ENCODE measurements at regions of chr9 and their contacts with region 1.

Region 1: GRCh38 chr9:91193658-91194391 is 167.9 kb downstream of the AUH start:
- DNase-seq: peak in 1 of 2 donors; percentile 95
- H3K4me3 ChIP-seq: peak overlapping the region; percentile 44 to 66
- H3K27ac ChIP-seq: peak overlapping the region; percentile 98 to 99
- H3K4me1 ChIP-seq: peaks cover 6 to 29% of the 10 kb centered on the region in 2 donors
- H3K27me3 ChIP-seq: no peaks in the 10 kb centered on the region
- CTCF ChIP-seq: no peak

Region 2: GRCh38 chr9:90964101-90965020 is 229.5 kb before region 1 on chr9:
- intact Hi-C with region 1: loop called (anchors 5 kb)
- DNase-seq: peak in 1 of 2 donors; percentile 83
- H3K4me3 ChIP-seq: peak overlapping the region; percentile 20 to 58
- H3K27ac ChIP-seq: peak overlapping the region; percentile 82 to 93
- H3K4me1 ChIP-seq: peaks cover 6 to 17% of the 10 kb centered on the region in 2 donors
- H3K27me3 ChIP-seq: no peaks in the 10 kb centered on the region
- CTCF ChIP-seq: peak; percentile 32 to 42 (median 33)

Region 3: DNA sequence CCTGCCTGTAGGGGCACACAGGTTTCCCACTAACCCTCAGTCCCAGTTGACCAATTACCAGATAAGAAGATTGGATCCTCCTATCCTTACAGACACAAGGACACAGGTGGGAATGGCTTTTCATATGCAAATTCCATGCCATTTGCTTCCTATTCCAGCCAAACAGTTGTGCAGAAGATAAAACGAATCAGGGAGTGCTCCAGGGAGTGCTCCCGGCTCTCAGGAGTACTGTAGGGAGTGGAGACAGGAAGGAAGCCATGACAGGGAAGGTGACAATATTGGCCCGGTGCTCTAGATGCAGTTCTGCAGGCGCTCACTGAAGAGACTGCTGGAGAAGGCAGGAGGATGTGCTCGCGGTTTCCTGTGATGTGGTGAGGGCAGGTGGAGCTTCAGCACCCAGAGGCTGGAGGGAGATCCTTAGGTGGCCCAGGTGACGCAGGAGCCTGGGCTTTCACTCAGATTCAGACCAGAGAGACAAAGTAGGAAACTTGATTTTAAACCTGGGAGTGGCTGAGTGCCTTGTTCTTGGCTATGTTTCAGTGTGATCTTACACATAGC is 92.1 kb before region 1 on chr9:
- intact Hi-C with region 1: loop called (anchors 1 kb)
- DNase-seq: no peak
- H3K4me3 ChIP-seq: no peak overlapping the region
- H3K27ac ChIP-seq: peak overlapping the region; percentile 82 to 85
- H3K4me1 ChIP-seq: peaks cover 8 to 17% of the 10 kb centered on the region in 2 donors
- H3K27me3 ChIP-seq: no peaks in the 10 kb centered on the region
- CTCF ChIP-seq: no peak

Region 4: DNA sequence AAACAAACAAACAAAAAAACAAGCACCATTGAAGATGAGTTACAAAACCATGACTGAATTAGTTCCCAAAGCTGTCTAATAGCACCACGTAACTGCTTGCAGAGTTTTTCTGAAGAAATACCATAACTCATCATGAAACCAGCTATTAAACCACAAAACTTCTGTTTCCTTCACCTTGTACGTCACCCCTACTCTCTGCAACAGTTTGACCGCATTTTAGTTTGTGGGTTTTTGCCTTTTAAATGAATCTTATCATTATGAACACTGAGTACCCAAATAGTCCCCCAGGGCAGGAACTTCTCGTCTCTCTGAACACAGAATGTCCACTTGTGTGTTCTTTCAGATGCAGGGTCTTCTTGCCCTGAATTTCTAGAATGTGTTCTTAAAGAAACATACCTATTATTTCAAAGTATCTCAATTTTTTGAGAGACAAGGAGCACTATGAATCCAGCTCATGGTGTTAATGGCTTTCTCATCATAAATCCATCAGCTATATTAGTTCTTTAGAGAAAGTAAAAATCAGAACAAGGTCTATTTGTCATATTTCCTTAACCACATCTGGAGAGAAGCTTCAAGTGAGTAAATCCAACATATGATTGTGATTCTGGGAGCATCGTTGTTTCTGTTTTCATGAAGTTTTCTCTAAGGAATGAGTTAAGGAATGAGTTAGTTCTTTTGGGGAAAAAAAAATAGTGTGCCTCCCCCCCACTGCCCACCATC is 42.7 kb before region 1 on chr9:
- intact Hi-C with region 1: no loop called
- DNase-seq: no peak
- H3K4me3 ChIP-seq: no peak overlapping the region
- H3K27ac ChIP-seq: no peak overlapping the region
- H3K4me1 ChIP-seq: no peaks in the 10 kb centered on the region
- H3K27me3 ChIP-seq: no peaks in the 10 kb centered on the region
- CTCF ChIP-seq: no peak

Region 5: GRCh38 chr9:91207729-91208418 is 14.0 kb after region 1 on chr9:
- intact Hi-C with region 1: loop called (anchors 2 kb)
- DNase-seq: no peak
- H3K4me3 ChIP-seq: peak overlapping the region in 1 of 2 donors; percentile 34
- H3K27ac ChIP-seq: peak overlapping the region; percentile 73
- H3K4me1 ChIP-seq: peaks cover 0 to 10% of the 10 kb centered on the region in 2 donors
- H3K27me3 ChIP-seq: no peaks in the 10 kb centered on the region
- CTCF ChIP-seq: no peak

Region 6: GRCh38 chr9:91361291-91362050 is 167.6 kb after region 1 on chr9 and contains the start of gene AUH:
- intact Hi-C with region 1: loop called (anchors 1 kb)
- DNase-seq: peak; percentile 38 to 89
- H3K4me3 ChIP-seq: peak within 1 kb of the TSS; percentile 89 to 96
- H3K27ac ChIP-seq: peak within 1 kb of the TSS; percentile 86 to 88
- H3K4me1 ChIP-seq: peaks cover 0 to 7% of the 10 kb centered on the region in 2 donors
- H3K27me3 ChIP-seq: no peaks in the 10 kb centered on the region
- CTCF ChIP-seq: no peak
- total RNA-seq, gene AUH: 46.2 TPM

Region 7: DNA sequence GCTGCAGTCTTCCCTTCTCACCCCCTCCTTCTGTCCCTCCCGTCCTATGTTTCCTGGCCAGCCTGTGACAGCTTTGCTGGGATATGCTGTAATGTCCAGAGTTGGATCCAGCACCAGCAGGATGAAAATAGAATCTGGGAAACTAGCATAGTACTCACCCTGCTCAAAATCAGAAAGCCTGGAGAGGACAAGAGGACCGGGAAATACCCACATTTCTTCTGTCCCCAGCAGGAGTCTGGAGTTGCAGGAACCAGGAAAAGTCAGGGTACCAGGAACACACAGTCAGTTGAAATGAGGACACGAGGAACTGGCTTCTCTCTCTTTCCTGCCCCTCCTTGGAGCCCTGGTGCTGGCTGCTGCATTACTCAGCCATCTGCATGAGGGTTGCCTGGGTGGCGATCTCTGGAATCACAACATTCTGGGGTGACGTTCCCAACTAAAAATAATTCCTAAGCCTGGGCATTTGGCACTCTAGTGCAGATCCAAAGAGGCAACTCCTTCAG is 289.4 kb after region 1 on chr9:
- intact Hi-C with region 1: loop called (anchors 5 kb)
- DNase-seq: peak; percentile 29 to 85
- H3K4me3 ChIP-seq: peak overlapping the region in 1 of 2 donors; percentile 34
- H3K27ac ChIP-seq: peak overlapping the region; percentile 76 to 84
- H3K4me1 ChIP-seq: peaks cover 0 to 7% of the 10 kb centered on the region in 2 donors
- H3K27me3 ChIP-seq: no peaks in the 10 kb centered on the region
- CTCF ChIP-seq: no peak

Measured in ascending aorta (tissue), 2 donors.